ENCODE measurements at regions of chr3 and their contacts with region 1.

Region 1: GRCh38 chr3:51941798-51942602 is at the starts of genes PARP3 and RRP9:
- DNase-seq: peak; percentile 100
- ATAC-seq: peak; percentile 91 to 93 (median 92)
- H3K4me3 ChIP-seq: peak within 1 kb of the TSS; percentile 97
- H3K27ac ChIP-seq: peak within 1 kb of the TSS; percentile 97
- H3K4me1 ChIP-seq: peaks cover 26% of the 10 kb centered on the region
- H3K27me3 ChIP-seq: no peaks in the 10 kb centered on the region
- CTCF ChIP-seq: peak; percentile 100
- total RNA-seq, gene PARP3: 10.0 to 15.8 (median 13.1) TPM
- total RNA-seq, gene RRP9: 19.9 to 28.2 (median 26.3) TPM

Region 2: GRCh38 chr3:51974963-51975851 is 33.2 kb after region 1 on chr3 and contains the start of gene ABHD14A:
- intact Hi-C with region 1: loop called (anchors 1 to 2 kb)
- DNase-seq: peak; percentile 76 to 88
- ATAC-seq: peak; percentile 63 to 82 (median 72)
- H3K4me3 ChIP-seq: peak within 1 kb of the TSS; percentile 75
- H3K27ac ChIP-seq: peak within 1 kb of the TSS; percentile 93
- H3K4me1 ChIP-seq: peaks cover 30% of the 10 kb centered on the region
- H3K27me3 ChIP-seq: no peaks in the 10 kb centered on the region
- CTCF ChIP-seq: no peak
- total RNA-seq, gene ABHD14A: 11.2 to 22.9 (median 15.4) TPM

Region 3: DNA sequence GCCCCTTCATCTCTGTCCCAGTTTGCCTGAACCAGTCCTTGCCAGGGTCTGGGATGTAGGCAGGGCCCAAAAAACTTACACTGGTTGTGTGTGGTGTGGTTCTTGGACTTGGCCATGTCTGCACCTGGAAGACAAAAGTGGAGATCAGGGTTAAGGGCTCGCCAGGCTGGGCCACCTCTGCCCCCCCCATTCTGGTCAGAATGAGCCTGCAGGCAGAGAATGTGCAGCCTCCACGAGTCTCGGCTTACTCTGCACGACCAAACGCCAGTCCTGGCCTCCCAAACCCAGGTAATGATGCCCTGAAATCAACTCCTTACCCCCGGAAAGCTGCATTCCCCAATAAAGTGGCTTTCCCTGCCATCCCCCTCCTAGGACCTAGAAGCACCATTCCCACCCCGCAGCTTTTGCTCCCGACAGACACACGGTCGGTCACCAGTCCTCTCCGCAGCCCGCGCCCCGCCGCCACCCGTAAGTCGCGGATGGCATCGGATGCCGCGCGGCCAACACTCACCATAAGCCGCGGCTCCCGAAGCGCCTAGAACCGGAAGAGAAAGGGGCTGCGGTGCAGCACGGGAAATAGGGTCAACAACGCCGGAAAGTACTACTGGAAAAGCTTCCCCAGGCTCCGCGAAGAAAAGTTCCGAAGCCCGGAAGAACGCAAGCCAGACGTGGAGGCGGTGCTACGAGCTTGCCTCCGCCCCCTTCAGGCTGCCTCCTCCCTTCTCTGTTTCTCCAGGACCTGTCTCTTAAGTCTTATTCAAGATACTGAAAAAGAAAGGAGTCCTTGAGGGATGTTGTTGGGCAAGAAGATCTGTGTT is 53.6 kb after region 1 on chr3 and contains the start of gene RPL29:
- intact Hi-C with region 1: loop called in 1 of 2 experiments (anchors 1 kb)
- DNase-seq: peak; percentile 90 to 94
- ATAC-seq: peak; percentile 92 to 96 (median 94)
- H3K4me3 ChIP-seq: peak within 1 kb of the TSS; percentile 89
- H3K27ac ChIP-seq: peak within 1 kb of the TSS; percentile 83
- H3K4me1 ChIP-seq: peaks cover 28% of the 10 kb centered on the region
- H3K27me3 ChIP-seq: no peaks in the 10 kb centered on the region
- CTCF ChIP-seq: no peak
- total RNA-seq, gene RPL29: 1,113 to 1,294 (median 1,226) TPM

Measured in psoas muscle (tissue), 8 donors.